Ascending aorta (tissue), 2 donors: ENCODE measurements at regions of chr1 and their contacts with region 1.

Region 1: GRCh38 chr1:61299463-61299862 is 217.1 kb downstream of the NFIA start:
- DNase-seq: no peak
- H3K4me3 ChIP-seq: peak overlapping the region in 1 of 2 donors; percentile 40
- H3K27ac ChIP-seq: peak overlapping the region; percentile 77 to 79
- H3K4me1 ChIP-seq: peaks cover 7 to 47% of the 10 kb centered on the region in 2 donors
- H3K27me3 ChIP-seq: no peaks in the 10 kb centered on the region
- CTCF ChIP-seq: no peak

Region 2: GRCh38 chr1:61332196-61332753 is 32.8 kb after region 1 on chr1:
- intact Hi-C with region 1: loop called (anchors 5 kb)
- DNase-seq: no peak
- H3K4me3 ChIP-seq: no peak overlapping the region
- H3K27ac ChIP-seq: no peak overlapping the region
- H3K4me1 ChIP-seq: peaks cover 0 to 21% of the 10 kb centered on the region in 2 donors
- H3K27me3 ChIP-seq: no peaks in the 10 kb centered on the region
- CTCF ChIP-seq: no peak